Activated naive CD4-positive, alpha-beta T cell treated with anti-CD3 and anti-CD28 coated beads, Interleukin-2, amount 10 ng/mL, durations not matched to agents 7 days and 5 days (primary cell): ENCODE measurements at regions of chr15 and their contacts with region 1.

Region 1: DNA sequence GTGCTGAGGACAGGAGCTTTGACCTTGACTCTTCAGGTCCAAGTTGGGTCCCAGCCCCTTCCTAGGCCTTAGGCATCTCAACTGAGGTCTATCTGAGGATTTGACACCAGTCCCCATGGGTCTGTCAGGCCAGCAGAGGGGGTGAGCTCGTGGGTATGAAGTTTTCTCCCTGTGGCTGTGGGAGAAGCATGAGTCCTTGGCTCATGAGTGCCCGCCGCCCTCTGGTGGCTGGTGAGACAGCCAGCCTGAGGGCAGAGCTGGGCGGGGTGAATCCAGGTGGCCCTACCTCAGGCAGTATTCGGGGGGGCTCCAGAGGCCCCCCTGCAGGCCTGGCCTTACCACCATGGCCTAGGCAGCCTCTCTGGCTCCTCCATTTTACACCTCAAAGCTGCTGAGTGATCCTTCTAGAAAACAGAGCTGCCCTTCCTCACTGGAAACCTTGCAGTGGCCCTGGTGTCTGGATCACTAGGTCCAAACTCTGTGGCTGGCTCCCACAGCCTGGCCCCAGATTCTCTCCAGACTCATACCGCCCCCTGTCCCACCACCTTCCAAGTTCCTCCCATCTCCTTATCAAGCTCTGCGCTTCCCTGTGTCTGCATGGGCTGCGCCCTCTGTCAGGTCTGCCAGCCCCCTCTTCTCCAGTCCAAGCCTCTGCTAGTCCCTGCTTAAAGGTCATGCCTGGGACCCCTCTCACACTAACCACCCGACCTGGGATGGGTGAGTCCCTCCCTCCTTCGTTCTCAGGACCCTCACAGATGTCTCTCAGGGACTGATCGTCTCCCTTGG is 16.1 kb downstream of the SH2D7 start:
- DNase-seq: peak; percentile 91
- H3K4me3 Mint-ChIP-seq: no peak overlapping the region
- H3K27ac Mint-ChIP-seq: no peak overlapping the region
- H3K4me1 Mint-ChIP-seq: peaks cover 58% of the 10 kb centered on the region
- H3K27me3 Mint-ChIP-seq: no peaks in the 10 kb centered on the region

Region 2: DNA sequence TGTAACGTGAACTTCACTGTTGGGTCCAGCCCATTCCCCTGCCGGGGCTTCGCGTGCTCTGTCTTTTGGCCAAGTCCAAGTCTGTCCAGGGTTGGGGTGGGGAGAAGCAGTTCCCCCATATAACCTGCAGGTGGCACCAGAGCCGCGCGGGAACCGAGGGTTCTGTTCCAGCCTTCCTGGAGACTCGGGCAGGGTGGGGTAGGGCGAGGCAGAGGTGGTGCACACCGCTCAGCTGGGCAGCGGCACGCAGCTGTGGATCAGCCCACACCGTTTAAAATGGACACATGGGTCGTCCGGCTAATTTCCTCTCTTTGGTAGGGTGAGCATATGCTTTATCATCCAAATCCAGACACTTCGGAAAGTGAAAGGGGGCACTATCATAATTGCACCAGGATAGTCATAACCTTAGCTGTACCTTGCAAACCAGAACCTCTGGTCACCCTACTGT is 149.0 kb before region 1 on chr15:
- CTCF ChIA-PET with region 1: interaction called, 156 read pairs
- DNase-seq: peak; percentile 83
- H3K4me3 Mint-ChIP-seq: no peak overlapping the region
- H3K27ac Mint-ChIP-seq: no peak overlapping the region
- H3K4me1 Mint-ChIP-seq: peaks cover 17% of the 10 kb centered on the region
- H3K27me3 Mint-ChIP-seq: peaks cover 54% of the 10 kb centered on the region

Region 3: GRCh38 chr15:78012643-78013077 is 95.8 kb before region 1 on chr15:
- CTCF ChIA-PET with region 1: interaction called, 21 read pairs
- DNase-seq: no peak
- H3K4me3 Mint-ChIP-seq: no peak overlapping the region
- H3K27ac Mint-ChIP-seq: no peak overlapping the region
- H3K4me1 Mint-ChIP-seq: peaks cover under 1% of the 10 kb centered on the region
- H3K27me3 Mint-ChIP-seq: no peaks in the 10 kb centered on the region

Region 4: GRCh38 chr15:78040653-78041244 is 67.7 kb before region 1 on chr15:
- CTCF ChIA-PET with region 1: interaction called, 33 read pairs
- DNase-seq: no peak
- H3K4me3 Mint-ChIP-seq: no peak overlapping the region
- H3K27ac Mint-ChIP-seq: peak overlapping the region; percentile 15
- H3K4me1 Mint-ChIP-seq: peaks cover 92% of the 10 kb centered on the region
- H3K27me3 Mint-ChIP-seq: no peaks in the 10 kb centered on the region

Region 5: GRCh38 chr15:78077058-78077877 is 31.2 kb before region 1 on chr15 and contains the start of gene TBC1D2B:
- CTCF ChIA-PET with region 1: interaction called, 35 read pairs
- DNase-seq: peak; percentile 79
- H3K4me3 Mint-ChIP-seq: peak within 1 kb of the TSS; percentile 99
- H3K27ac Mint-ChIP-seq: peak within 1 kb of the TSS; percentile 92
- H3K4me1 Mint-ChIP-seq: peaks cover 48% of the 10 kb centered on the region
- H3K27me3 Mint-ChIP-seq: no peaks in the 10 kb centered on the region

Region 6: DNA sequence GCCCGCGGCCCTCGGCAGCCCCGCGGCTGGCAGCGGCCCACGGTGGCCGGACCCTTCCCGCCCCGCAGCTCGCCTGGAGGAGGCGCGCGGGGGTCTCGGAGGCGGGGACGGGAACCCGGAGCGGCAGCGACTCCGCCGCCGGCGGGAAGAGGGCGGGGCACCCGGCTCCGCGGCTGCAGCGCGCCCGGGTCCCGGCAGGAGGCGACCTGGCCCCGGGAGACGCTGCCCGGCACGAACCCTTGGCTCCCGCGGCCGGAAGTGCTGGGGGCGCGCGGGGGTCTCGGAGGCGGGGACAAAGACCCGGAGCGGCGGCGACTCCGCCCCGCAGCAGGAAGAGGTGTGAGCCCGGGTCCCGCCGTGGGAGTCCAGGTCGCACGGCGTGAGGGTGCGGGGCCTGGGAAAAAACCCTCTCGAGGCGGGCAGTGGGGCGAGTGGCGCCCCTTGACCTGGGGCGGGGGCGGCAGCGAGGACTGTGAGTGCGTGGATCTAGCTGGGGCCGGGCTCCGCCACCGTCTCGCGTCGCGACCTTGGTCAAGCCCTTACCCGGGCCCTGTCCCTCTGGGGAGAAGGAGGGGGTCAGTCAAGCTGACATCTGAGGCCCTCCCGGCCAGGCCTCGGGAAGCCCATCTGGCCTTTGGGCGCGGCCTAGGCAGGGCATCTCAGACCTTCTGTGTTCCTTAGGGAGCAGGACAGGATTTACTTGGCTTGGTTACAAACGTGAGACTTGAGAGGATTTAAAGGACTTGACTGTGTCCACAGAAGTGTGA is 23.0 kb after region 1 on chr15 and contains the start of gene CIB2:
- CTCF ChIA-PET with region 1: interaction called, 18 read pairs
- DNase-seq: peak; percentile 84
- H3K4me3 Mint-ChIP-seq: peak within 1 kb of the TSS; percentile 76
- H3K27ac Mint-ChIP-seq: peak within 1 kb of the TSS; percentile 34
- H3K4me1 Mint-ChIP-seq: peaks cover 24% of the 10 kb centered on the region
- H3K27me3 Mint-ChIP-seq: peaks cover 11% of the 10 kb centered on the region

Region 7: DNA sequence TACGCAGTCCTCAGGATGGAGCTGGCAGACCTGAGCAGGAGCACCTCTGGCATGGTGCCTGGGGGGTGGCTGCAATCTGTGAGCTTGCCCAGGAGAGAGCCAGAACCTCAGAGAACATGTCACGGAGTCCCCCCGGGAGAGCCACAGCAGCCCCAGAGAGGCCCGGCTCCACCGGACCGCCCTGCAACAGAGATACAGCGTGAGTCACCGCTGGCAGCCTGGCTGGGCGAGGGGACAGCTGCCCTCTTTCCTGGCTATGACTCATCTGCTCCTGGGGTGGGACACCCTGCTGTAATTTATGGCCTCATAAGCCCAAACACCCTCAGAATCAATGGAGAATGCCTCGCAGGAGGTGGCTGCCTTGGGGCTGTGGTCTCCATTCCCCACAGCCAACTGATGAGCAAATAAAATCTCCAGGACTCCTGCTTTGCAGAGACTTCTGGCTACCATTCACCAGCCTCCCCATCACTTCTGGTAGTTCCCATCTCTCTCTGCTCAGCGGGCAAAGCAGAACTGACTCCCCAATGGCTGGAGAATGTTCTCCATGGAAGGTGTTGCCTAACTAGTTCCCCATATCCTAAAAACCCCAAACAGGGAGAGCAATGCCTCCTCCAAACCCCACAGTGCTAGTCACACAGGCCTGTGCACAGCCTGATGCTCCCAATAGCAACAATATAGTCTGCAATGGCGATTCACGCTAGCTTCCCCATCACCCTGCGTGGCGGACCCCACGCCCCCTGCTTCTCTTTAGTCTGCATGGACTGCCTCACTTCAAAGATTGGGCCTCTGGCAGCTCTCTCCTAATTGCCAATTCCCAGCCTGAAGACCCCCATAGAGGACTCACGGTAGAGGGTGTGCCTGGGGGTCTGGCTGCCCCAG is 104.3 kb after region 1 on chr15:
- CTCF ChIA-PET with region 1: no interaction called
- DNase-seq: no peak
- H3K4me3 Mint-ChIP-seq: no peak overlapping the region
- H3K27ac Mint-ChIP-seq: no peak overlapping the region
- H3K4me1 Mint-ChIP-seq: no peaks in the 10 kb centered on the region
- H3K27me3 Mint-ChIP-seq: peaks cover 11% of the 10 kb centered on the region

Region 8: DNA sequence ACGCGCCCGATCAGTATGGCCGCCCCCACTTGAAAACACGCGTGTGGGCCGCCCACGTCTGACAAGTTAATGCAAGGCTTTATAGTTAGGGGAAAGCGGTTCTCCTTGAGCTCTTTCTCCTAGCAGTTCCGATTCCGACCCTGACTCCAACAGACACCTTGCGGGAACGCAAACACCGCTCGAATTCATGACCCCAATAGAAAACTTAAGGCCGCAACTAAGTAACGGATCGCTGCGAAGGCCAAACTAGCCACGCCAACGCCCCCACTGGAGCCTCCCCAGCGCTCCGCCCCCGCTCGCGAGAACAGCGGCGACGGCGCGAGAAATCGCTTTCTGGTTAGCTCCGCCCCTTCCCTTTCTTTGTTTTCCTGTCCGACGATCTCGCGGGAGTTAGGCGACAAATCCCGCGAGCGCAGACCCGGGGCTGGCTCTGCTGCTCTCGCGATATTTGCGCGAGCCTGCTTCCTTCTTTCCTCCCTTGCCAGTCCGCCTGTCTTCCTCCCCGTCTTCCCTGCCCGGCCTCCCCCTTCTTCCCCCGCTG is 329.3 kb after region 1 on chr15 and contains the start of gene IREB2:
- CTCF ChIA-PET with region 1: no interaction called
- DNase-seq: peak; percentile 97
- H3K4me3 Mint-ChIP-seq: peak within 1 kb of the TSS; percentile 91
- H3K27ac Mint-ChIP-seq: peak within 1 kb of the TSS; percentile 95
- H3K4me1 Mint-ChIP-seq: peaks cover 47% of the 10 kb centered on the region
- H3K27me3 Mint-ChIP-seq: no peaks in the 10 kb centered on the region